ENCODE measurements at regions of chr12 and their contacts with region 1.

Region 1: GRCh38 chr12:2691006-2691344 is 103.8 kb upstream of the FKBP4 start:
- DNase-seq: peak in 8 of 9 experiments; percentile 35 to 86 (median 66)
- ATAC-seq: peak; percentile 75
- H3K4me3 ChIP-seq: peak overlapping the region; percentile 50 to 80
- H3K4me3 Mint-ChIP-seq: peak overlapping the region; percentile 92
- H3K27ac ChIP-seq: peak overlapping the region; percentile 75 to 87
- H3K27ac Mint-ChIP-seq: peak overlapping the region; percentile 90
- H3K4me1 ChIP-seq: peaks cover 30% of the 10 kb centered on the region
- H3K4me1 Mint-ChIP-seq: peaks cover 48% of the 10 kb centered on the region
- H3K27me3 ChIP-seq: no peaks in the 10 kb centered on the region
- H3K27me3 Mint-ChIP-seq: no peaks in the 10 kb centered on the region
- CTCF ChIP-seq: no peak

Region 2: DNA sequence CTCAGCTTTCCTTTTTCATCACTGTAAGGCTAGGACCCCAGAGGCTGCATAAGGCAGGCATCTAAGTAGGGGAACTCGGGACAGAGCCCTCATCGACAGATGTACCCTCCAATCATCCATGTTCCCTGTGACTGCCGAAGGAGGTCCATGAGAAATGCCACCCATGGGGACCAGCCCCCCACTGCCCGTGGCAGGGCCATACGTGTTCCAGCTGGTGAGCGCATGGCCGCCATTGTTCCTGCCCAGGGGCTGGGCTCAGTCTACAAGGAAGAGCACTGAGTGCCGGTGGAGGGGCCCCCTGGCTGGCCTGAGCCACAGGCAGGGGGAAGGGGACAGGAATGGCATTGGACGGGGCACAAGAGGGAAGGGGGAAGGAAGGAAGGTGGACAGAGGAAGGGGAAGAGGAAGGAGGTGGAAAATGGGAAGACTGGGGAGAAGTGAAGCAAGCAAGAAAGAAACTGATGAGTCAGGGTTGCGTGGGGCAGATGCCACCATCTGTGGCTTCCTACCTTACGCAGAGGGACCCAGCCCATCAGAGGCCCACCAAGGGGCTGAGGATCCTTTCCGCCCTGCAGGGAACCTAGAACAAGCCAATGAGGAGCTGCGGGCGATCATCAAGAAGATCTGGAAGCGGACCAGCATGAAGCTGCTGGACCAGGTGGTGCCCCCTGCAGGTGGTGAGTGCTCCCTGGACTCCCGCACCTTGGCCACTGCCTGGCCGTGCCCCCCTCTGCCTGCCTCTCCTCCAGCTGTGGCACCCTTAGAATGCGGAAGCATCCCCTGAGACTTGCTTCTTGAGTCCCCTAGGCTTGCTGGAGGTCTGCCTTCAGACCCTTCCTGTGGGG is 16.8 kb before region 1 on chr12:
- CTCF ChIA-PET with region 1: no interaction called
- POLR2A ChIA-PET with region 1: no interaction called
- intact Hi-C with region 1: no loop called
- DNase-seq: peak in 1 of 9 experiments; percentile 44
- ATAC-seq: no peak
- H3K4me3 ChIP-seq: no peak overlapping the region
- H3K4me3 Mint-ChIP-seq: no peak overlapping the region
- H3K27ac ChIP-seq: no peak overlapping the region
- H3K27ac Mint-ChIP-seq: no peak overlapping the region
- H3K4me1 ChIP-seq: no peaks in the 10 kb centered on the region
- H3K4me1 Mint-ChIP-seq: no peaks in the 10 kb centered on the region
- H3K27me3 ChIP-seq: no peaks in the 10 kb centered on the region
- H3K27me3 Mint-ChIP-seq: no peaks in the 10 kb centered on the region
- CTCF ChIP-seq: no peak

Region 3: DNA sequence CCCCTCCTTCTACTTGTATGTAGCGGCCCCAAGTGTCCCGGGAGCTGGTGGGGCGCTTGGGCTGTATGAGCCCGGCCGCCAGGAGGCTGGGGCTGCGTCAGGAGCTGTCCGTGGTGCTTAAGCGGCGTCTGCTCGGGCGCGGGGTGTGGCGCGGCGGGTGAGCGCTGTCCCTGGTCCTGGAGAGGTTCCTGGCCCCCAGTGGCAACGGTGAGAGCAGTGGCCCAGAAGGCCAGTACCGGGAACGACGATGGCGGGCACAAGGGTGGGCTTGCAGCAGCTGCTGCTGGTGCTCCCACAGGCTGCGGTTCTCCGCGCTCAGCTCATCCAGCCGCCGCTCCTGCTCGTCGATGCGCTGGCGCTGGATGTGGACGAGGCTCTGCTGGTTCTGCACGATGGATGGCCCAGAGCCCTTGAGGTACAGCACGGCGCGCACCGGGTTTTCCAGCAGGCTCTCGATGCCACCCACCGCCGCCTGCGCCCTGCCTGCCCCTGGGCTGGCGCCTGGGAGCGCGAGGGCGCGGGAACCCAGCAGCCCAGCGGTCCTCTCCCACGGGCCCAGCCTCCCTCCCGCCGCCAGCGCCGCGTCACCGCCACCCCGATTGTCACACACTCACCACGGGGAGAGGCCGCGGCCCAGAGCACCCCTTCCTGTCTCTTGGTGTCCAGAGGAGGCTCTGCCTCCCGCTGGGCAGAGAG is 61.8 kb after region 1 on chr12:
- CTCF ChIA-PET with region 1: no interaction called
- POLR2A ChIA-PET with region 1: no interaction called
- intact Hi-C with region 1: loop called (anchors 1 to 2 kb)
- DNase-seq: peak; percentile 63 to 87 (median 80)
- ATAC-seq: peak; percentile 100
- H3K4me3 ChIP-seq: no peak overlapping the region
- H3K4me3 Mint-ChIP-seq: no peak overlapping the region
- H3K27ac ChIP-seq: no peak overlapping the region
- H3K27ac Mint-ChIP-seq: no peak overlapping the region
- H3K4me1 ChIP-seq: peaks cover 3% of the 10 kb centered on the region
- H3K4me1 Mint-ChIP-seq: no peaks in the 10 kb centered on the region
- H3K27me3 ChIP-seq: peaks cover 0 to 5% of the 10 kb centered on the region in 2 experiments
- H3K27me3 Mint-ChIP-seq: peaks cover 34% of the 10 kb centered on the region
- CTCF ChIP-seq: no peak

Region 4: DNA sequence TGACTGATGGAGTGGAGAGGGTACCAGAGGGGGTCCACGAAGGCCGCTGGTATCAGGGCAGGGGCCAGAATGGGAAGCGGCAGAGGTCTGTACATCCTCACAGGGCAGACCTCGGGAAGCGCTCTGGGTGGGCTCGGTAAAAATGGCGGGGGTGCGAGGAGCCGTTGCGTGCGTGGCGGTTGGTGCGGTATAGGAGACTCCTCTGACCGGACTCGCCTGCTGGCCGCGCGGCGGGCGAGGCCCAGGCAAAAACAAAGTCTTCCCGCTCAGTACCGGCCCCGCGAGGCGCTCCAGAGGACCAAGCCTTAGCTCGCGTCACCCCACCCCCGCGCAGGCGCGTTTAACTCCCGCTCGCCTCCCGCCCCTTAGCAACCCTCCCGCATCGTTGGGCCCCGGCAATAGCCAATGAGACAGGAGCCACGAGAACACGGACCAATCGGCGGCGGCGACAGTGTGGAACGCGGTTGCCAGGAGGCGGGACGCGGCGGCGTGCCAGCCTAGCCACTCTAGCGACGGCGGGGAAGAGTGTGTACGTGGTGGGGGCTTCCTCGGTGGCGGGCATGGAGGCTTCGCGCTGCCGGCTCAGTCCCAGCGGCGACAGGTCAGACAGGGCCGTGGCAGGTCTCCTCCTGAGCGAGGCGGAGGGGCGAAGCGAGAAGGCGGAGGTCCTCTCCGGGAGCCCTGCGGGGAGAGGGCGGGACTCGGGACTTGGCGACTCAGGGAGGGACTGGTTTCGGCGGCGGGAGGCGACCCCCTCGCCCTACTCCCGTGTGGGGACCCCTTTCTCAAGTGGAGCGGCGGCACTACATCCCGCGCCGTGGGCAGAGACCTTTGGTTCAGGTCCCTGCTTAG is 199.6 kb after region 1 on chr12 and contains the start of gene TULP3:
- CTCF ChIA-PET with region 1: no interaction called
- POLR2A ChIA-PET with region 1: no interaction called
- intact Hi-C with region 1: loop called (anchors 1 to 5 kb)
- DNase-seq: peak; percentile 97 to 99 (median 98)
- ATAC-seq: peak; percentile 94
- H3K4me3 ChIP-seq: peak within 1 kb of the TSS; percentile 98 to 99
- H3K4me3 Mint-ChIP-seq: peak within 1 kb of the TSS; percentile 98
- H3K27ac ChIP-seq: peak within 1 kb of the TSS; percentile 71 to 85
- H3K27ac Mint-ChIP-seq: peak within 1 kb of the TSS; percentile 95
- H3K4me1 ChIP-seq: peaks cover 16% of the 10 kb centered on the region
- H3K4me1 Mint-ChIP-seq: peaks cover 30% of the 10 kb centered on the region
- H3K27me3 ChIP-seq: no peaks in the 10 kb centered on the region
- H3K27me3 Mint-ChIP-seq: no peaks in the 10 kb centered on the region
- CTCF ChIP-seq: no peak
- total RNA-seq, gene TULP3: 2.7 to 3.0 TPM

Measured in CD8-positive, alpha-beta T cell (primary cell).